Panc1 (cell line): ENCODE measurements at regions of chr3 and their contacts with region 1.

Region 1: GRCh38 chr3:33067484-33067883 is 29.5 kb downstream of the GLB1 start:
- DNase-seq: no peak
- ATAC-seq: no peak
- H3K4me3 ChIP-seq: no peak overlapping the region
- H3K27ac ChIP-seq: no peak overlapping the region
- H3K4me1 ChIP-seq: no peaks in the 10 kb centered on the region
- H3K27me3 ChIP-seq: no peaks in the 10 kb centered on the region
- CTCF ChIP-seq: no peak

Region 2: GRCh38 chr3:32888739-32889138 is 178.7 kb before region 1 on chr3:
- CTCF ChIA-PET with region 1: no interaction called
- POLR2A ChIA-PET with region 1: no interaction called
- in situ Hi-C with region 1: no loop called
- intact Hi-C with region 1: no loop called
- DNase-seq: no peak
- ATAC-seq: no peak
- H3K4me3 ChIP-seq: no peak overlapping the region
- H3K27ac ChIP-seq: no peak overlapping the region
- H3K4me1 ChIP-seq: no peaks in the 10 kb centered on the region
- H3K27me3 ChIP-seq: no peaks in the 10 kb centered on the region
- CTCF ChIP-seq: no peak

Region 3: GRCh38 chr3:33124638-33125037 is 57.2 kb after region 1 on chr3:
- CTCF ChIA-PET with region 1: no interaction called
- POLR2A ChIA-PET with region 1: interaction called, 21 read pairs
- in situ Hi-C with region 1: no loop called
- intact Hi-C with region 1: no loop called
- DNase-seq: no peak
- ATAC-seq: no peak
- H3K4me3 ChIP-seq: no peak overlapping the region
- H3K27ac ChIP-seq: no peak overlapping the region
- H3K4me1 ChIP-seq: no peaks in the 10 kb centered on the region
- H3K27me3 ChIP-seq: no peaks in the 10 kb centered on the region
- CTCF ChIP-seq: no peak